Activated T-helper 1 cell treated with anti-CD3 and anti-CD28 coated beads, Interleukin-12 subunit alpha, Interleukin-12 subunit beta, Interleukin-2, Interleukin-4 antibody, amounts not matched to agents 30 ng/mL and 10 ng/mL and 1 ng/mL, durations not matched to agents 14 hours and 24 hours and 36 hours (primary cell): ENCODE measurements at regions of chr3 and their contacts with region 1.

Region 1: GRCh38 chr3:161770484-161771386 is 274.1 kb downstream of the OTOL1 start:
- DNase-seq: no peak
- H3K4me3 Mint-ChIP-seq: peak overlapping the region; percentile 29
- H3K27ac Mint-ChIP-seq: peak overlapping the region; percentile 31
- H3K4me1 Mint-ChIP-seq: peaks cover 16% of the 10 kb centered on the region
- H3K27me3 Mint-ChIP-seq: no peaks in the 10 kb centered on the region

Region 2: GRCh38 chr3:161800985-161801559 is 30.3 kb after region 1 on chr3:
- intact Hi-C with region 1: loop called (anchors 2 kb)
- DNase-seq: no peak
- H3K4me3 Mint-ChIP-seq: no peak overlapping the region
- H3K27ac Mint-ChIP-seq: no peak overlapping the region
- H3K4me1 Mint-ChIP-seq: no peaks in the 10 kb centered on the region
- H3K27me3 Mint-ChIP-seq: no peaks in the 10 kb centered on the region